ENCODE measurements at regions of chr10 and their contacts with region 1.

Region 1: GRCh38 chr10:112434988-112435619 is 11.6 kb downstream of the ZDHHC6 start:
- DNase-seq: no peak
- H3K4me3 ChIP-seq: no peak overlapping the region
- H3K4me3 Mint-ChIP-seq: no peak overlapping the region
- H3K27ac Mint-ChIP-seq: no peak overlapping the region
- H3K4me1 ChIP-seq: no peaks in the 10 kb centered on the region
- H3K4me1 Mint-ChIP-seq: no peaks in the 10 kb centered on the region
- H3K27me3 ChIP-seq: no peaks in the 10 kb centered on the region
- H3K27me3 Mint-ChIP-seq: no peaks in the 10 kb centered on the region
- CTCF ChIP-seq: peak; percentile 31 to 57

Region 2: DNA sequence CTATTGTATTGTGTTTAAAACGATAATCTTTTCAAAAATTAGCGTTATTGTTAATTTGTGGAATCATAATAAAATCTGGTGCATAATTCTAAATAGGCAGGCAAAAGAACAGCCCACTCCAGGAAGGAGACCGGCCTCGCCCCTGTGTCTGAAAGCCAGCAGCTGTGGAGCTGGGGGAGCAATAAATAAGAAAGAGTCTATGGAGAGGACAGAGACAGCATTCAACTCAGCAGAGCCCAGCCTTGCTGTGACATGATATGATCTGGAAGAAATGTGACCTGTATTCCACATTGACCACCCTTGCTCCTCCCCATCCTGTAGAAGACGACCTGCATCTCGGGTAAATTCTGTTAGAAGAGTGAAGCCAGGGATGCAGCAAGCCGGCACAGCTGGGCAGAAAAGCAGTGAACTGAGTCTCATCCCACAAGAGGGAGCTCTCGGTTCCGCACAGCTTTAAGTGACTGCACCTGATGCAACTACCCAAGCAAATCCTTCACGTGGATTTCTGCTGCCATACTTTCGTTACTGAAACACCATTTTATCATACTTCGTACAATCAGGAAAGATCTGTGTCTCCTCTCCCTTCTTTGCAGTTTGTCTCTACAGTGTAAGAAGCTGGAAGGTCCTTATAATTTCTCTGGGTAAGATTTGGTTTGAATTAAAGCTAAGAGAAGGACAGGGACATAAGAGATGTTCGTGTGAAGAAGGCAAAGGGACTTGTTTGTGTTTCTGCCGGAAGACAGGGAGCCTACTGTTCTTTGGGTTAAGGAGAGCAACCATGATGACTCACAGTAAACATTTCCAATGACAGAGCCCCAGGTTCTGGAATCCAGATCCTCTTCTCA is 678.7 kb before region 1 on chr10:
- CTCF ChIA-PET with region 1: no interaction called
- POLR2A ChIA-PET with region 1: no interaction called
- intact Hi-C with region 1: loop called (anchors 10 kb)
- DNase-seq: peak; percentile 68 to 69
- H3K4me3 ChIP-seq: no peak overlapping the region
- H3K4me3 Mint-ChIP-seq: peak overlapping the region; percentile 55
- H3K27ac Mint-ChIP-seq: no peak overlapping the region
- H3K4me1 ChIP-seq: no peaks in the 10 kb centered on the region
- H3K4me1 Mint-ChIP-seq: no peaks in the 10 kb centered on the region
- H3K27me3 ChIP-seq: no peaks in the 10 kb centered on the region
- H3K27me3 Mint-ChIP-seq: peaks cover 7% of the 10 kb centered on the region
- CTCF ChIP-seq: peak; percentile 57 to 78

Region 3: GRCh38 chr10:112115799-112116385 is 319.2 kb before region 1 on chr10:
- CTCF ChIA-PET with region 1: interaction called, 4 read pairs
- POLR2A ChIA-PET with region 1: no interaction called
- intact Hi-C with region 1: loop called (anchors 2 kb)
- DNase-seq: peak; percentile 62 to 73
- H3K4me3 ChIP-seq: no peak overlapping the region
- H3K4me3 Mint-ChIP-seq: no peak overlapping the region
- H3K27ac Mint-ChIP-seq: no peak overlapping the region
- H3K4me1 ChIP-seq: no peaks in the 10 kb centered on the region
- H3K4me1 Mint-ChIP-seq: no peaks in the 10 kb centered on the region
- H3K27me3 ChIP-seq: no peaks in the 10 kb centered on the region
- H3K27me3 Mint-ChIP-seq: peaks cover 10% of the 10 kb centered on the region
- CTCF ChIP-seq: peak; percentile 88 to 91

Region 4: DNA sequence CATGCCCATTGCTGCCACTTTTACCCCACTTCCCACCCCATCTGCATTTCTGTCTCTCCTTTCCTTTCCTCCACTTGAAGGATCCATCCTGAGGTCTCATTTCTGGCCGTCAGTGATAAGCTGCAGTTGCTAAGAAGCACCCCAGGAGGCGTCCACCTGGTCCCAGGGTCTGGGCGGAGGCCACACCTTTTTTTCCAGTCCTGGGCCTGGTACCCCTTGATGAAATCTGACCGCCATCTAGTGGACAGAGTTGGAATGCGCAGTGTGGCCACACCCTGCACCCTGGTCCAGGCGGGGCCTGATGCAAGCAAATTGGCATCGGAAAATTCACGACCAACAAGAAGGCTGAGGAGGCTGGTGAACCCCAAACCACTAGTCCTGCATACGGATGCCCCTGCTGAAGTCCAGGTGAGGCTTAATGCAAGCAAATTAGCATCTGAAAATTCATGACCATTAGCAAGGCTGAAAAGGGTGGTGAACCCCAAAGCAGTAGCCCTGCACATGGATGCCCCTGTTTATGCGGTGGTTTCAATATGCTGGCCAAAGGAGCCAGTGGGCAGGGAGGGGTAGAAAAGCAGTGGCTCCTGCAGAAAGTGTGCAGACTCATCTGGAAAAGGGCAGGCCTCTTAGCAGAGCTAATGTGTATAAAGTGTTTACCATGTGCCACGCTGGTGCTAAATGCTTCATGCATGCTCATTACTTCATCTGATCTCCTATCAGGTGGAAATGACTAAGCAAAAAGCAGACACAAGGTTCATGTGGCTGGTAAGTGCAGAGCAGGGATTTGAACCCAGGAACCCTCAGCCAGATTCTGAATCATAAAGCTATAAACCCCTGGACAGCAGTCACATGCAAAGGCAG is 294.8 kb before region 1 on chr10:
- CTCF ChIA-PET with region 1: interaction called, 7 read pairs
- POLR2A ChIA-PET with region 1: no interaction called
- intact Hi-C with region 1: loop called (anchors 10 kb)
- DNase-seq: peak; percentile 86 to 89
- H3K4me3 ChIP-seq: no peak overlapping the region
- H3K4me3 Mint-ChIP-seq: no peak overlapping the region
- H3K27ac Mint-ChIP-seq: no peak overlapping the region
- H3K4me1 ChIP-seq: no peaks in the 10 kb centered on the region
- H3K4me1 Mint-ChIP-seq: no peaks in the 10 kb centered on the region
- H3K27me3 ChIP-seq: no peaks in the 10 kb centered on the region
- H3K27me3 Mint-ChIP-seq: no peaks in the 10 kb centered on the region
- CTCF ChIP-seq: peak; percentile 88 to 91

Region 5: GRCh38 chr10:112375721-112376395 is 59.2 kb before region 1 on chr10:
- CTCF ChIA-PET with region 1: interaction called, 7 read pairs
- POLR2A ChIA-PET with region 1: no interaction called
- intact Hi-C with region 1: loop called (anchors 2 kb)
- DNase-seq: no peak
- H3K4me3 ChIP-seq: peak overlapping the region; percentile 8; the same call in 1 of the 2 replicates
- H3K4me3 Mint-ChIP-seq: peak overlapping the region; percentile 71
- H3K27ac Mint-ChIP-seq: peak overlapping the region; percentile 88
- H3K4me1 ChIP-seq: peaks cover 70% of the 10 kb centered on the region
- H3K4me1 Mint-ChIP-seq: peaks cover 50% of the 10 kb centered on the region
- H3K27me3 ChIP-seq: no peaks in the 10 kb centered on the region
- H3K27me3 Mint-ChIP-seq: no peaks in the 10 kb centered on the region
- CTCF ChIP-seq: no peak

Region 6: GRCh38 chr10:112471878-112472487 is 36.9 kb after region 1 on chr10:
- CTCF ChIA-PET with region 1: interaction called, 12 read pairs
- POLR2A ChIA-PET with region 1: no interaction called
- intact Hi-C with region 1: loop called (anchors 1 kb)
- DNase-seq: peak in 1 of 2 experiments; percentile 21
- H3K4me3 ChIP-seq: no peak overlapping the region
- H3K4me3 Mint-ChIP-seq: no peak overlapping the region
- H3K27ac Mint-ChIP-seq: no peak overlapping the region
- H3K4me1 ChIP-seq: peaks cover 8% of the 10 kb centered on the region; the same call in 1 of the 2 replicates
- H3K4me1 Mint-ChIP-seq: no peaks in the 10 kb centered on the region
- H3K27me3 ChIP-seq: no peaks in the 10 kb centered on the region
- H3K27me3 Mint-ChIP-seq: no peaks in the 10 kb centered on the region
- CTCF ChIP-seq: peak; percentile 48 to 68

Region 7: GRCh38 chr10:112763916-112764520 is 328.9 kb after region 1 on chr10:
- CTCF ChIA-PET with region 1: no interaction called
- POLR2A ChIA-PET with region 1: no interaction called
- intact Hi-C with region 1: no loop called
- DNase-seq: no peak
- H3K4me3 ChIP-seq: no peak overlapping the region
- H3K4me3 Mint-ChIP-seq: no peak overlapping the region
- H3K27ac Mint-ChIP-seq: no peak overlapping the region
- H3K4me1 ChIP-seq: peaks cover 41% of the 10 kb centered on the region
- H3K4me1 Mint-ChIP-seq: peaks cover 56% of the 10 kb centered on the region
- H3K27me3 ChIP-seq: no peaks in the 10 kb centered on the region
- H3K27me3 Mint-ChIP-seq: no peaks in the 10 kb centered on the region
- CTCF ChIP-seq: no peak